ENCODE measurements at regions of chr22 and their contacts with region 1.

Region 1: DNA sequence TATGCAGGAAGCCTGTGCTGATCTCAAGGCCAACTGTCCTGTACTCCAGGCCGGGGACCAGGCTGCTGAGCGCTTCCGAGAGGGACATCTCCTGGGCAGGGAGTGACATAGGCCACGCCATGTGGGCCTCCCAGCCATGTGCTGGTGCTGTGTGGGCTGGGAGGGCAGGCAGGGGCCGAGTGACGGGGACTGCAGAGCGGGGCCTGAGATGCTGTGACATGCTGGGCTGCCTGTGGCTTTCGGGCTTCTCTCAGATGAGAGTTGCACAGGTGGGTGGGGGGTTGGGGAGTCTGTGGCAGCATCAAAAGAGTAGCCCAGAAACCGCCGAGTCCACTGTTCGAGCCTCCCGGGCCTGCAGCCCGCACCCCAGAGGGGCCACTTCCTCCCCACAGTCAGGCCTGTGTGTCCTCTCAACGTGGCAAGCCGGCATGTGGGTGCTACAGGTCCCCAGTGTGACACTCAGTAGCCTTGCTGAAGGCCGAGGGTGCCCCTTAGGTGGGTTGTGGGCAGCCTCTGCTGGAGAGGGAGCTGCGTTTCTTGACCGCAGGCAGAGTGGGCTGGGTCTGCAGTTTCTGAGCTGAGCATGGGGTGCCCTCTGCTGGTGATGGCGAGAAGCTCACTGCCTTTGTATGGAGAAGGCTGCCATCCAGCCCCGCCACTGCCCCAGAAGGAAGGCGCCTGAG is 101.2 kb downstream of the BCR start:
- DNase-seq: no peak
- H3K4me3 ChIP-seq: no peak overlapping the region
- H3K27me3 ChIP-seq: no peaks in the 10 kb centered on the region
- CTCF ChIP-seq: peak; percentile 90

Region 2: DNA sequence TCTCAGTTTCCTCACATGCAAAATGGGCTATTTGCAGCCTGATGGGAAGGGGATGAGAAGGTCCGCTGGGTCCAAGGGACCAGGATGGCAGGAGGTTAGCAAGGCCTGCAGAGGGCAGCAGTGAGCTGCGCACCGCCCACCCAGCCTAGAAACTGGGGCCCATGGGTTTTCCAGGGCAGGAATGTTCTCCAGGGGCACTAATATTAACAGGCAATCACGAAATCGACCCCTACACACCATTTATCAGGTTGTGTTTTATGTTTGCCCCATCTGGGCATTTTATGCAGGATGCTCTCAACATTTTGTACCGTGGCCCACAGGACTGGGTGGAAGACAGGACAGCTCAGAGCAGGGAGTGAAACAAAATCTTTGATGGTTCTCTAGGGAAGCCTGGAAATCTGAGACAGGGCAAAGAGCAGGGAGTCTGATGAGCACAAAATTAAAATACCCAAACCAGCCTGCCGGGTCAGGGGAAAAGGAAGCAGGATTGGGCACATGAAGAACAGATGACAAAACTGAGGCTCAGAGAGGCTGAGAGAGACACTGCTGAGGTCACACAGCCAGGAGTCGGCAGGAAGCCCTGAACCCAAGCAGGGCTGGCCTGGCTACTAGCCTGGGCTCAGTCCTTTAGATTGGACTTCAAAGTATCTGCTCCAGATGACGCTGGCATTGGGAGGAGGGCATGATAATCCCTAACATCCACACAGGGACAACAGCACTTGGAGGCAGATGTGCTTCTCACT is 102.9 kb before region 1 on chr22:
- CTCF ChIA-PET with region 1: interaction called, 670 read pairs
- POLR2A ChIA-PET with region 1: no interaction called
- DNase-seq: no peak
- H3K4me3 ChIP-seq: no peak overlapping the region
- H3K27me3 ChIP-seq: no peaks in the 10 kb centered on the region
- CTCF ChIP-seq: peak; percentile 99

Region 3: GRCh38 chr22:23263651-23264555 is 17.6 kb before region 1 on chr22:
- CTCF ChIA-PET with region 1: interaction called, 17 read pairs
- POLR2A ChIA-PET with region 1: no interaction called
- DNase-seq: no peak
- H3K4me3 ChIP-seq: no peak overlapping the region
- H3K27me3 ChIP-seq: no peaks in the 10 kb centered on the region
- CTCF ChIP-seq: no peak

Region 4: DNA sequence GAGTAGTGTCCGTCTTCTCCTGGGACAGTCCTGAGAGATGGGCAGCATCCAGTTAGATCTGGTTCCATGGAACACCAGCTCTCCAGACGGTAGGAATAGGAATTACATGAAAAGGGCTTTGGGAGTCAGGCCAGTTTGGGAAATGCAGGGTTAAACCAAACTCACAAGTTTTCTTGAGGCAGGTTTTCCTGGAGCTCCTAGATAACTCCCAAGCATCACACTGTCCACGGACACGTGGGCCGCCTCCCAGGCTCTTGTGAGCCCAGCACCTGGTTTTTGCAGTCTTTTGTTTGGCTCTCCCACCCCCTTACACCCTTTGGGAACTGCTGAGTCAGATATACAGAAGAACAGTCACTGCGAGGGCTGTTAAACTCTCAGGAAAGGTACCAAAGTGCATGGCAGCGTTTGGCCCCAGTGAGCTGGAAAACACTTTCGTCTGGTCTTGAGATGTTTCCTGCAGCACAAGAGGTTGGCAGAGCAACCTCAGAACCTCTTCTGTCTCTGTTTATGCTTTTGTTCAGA is 11.3 kb before region 1 on chr22:
- CTCF ChIA-PET with region 1: interaction called, 17 read pairs
- POLR2A ChIA-PET with region 1: no interaction called
- DNase-seq: no peak
- H3K4me3 ChIP-seq: no peak overlapping the region
- H3K27me3 ChIP-seq: no peaks in the 10 kb centered on the region
- CTCF ChIP-seq: peak; percentile 22

Region 5: GRCh38 chr22:23376256-23376655 is 94.7 kb after region 1 on chr22:
- CTCF ChIA-PET with region 1: no interaction called
- POLR2A ChIA-PET with region 1: no interaction called
- DNase-seq: no peak
- H3K4me3 ChIP-seq: no peak overlapping the region
- H3K27me3 ChIP-seq: peaks cover 3% of the 10 kb centered on the region; the same call in 1 of the 2 replicates
- CTCF ChIP-seq: peak; percentile 16; the same call in 1 of the 2 replicates

Measured in BJ (cell line).